ENCODE measurements at regions of chr10 and their contacts with region 1.

Region 1: DNA sequence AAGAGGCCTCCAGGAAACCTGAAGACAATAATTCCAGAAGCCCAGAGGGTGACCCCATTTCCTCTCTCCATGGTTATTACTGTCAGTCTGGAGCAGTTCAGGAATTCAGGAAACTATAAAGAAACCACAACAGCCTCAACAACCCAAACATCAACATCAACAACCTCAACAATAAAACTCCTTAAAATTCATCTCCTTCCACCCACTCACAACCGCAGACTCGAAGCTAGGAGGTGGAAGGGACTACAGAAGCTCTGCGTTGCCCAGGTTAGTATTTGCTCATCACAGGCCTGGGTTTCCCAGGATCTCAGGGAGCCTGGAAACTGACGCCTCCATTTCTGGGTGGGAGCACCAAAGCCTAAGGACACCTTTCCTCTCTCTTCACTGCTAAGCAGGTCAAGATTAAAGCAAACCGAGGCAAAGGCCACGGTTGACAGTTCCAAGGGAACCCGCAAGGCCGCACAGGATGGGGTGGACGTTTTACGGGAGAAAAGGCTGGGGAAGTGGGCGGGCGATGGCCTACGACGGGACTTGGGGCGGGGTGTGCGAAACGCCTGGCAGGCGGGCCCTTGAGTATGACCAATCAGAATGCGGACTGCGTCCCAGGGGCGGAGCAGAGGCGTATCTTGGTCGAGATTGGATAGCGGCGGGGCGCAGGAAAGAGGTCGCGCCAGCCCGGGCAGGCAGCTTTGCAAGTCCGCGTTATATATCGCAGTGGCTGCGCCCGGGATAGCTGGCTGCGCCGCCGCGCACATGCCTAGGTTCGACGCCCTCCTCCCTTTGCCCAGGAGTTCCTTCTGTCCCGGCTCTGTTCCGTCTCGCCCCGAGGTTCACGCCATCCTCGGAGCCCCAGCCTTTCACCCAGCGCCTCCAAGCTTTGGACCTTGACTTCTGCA is at the start of gene ELOVL3:
- H3K4me3 ChIP-seq: no peak within 1 kb of the TSS
- H3K27ac ChIP-seq: no peak within 1 kb of the TSS
- H3K4me1 ChIP-seq: peaks cover 7% of the 10 kb centered on the region
- CTCF ChIP-seq: no peak

Region 2: GRCh38 chr10:102208311-102209035 is 17.4 kb before region 1 on chr10:
- CTCF ChIA-PET with region 1: interaction called, 12 read pairs
- POLR2A ChIA-PET with region 1: no interaction called
- H3K4me3 ChIP-seq: no peak overlapping the region
- H3K27ac ChIP-seq: no peak overlapping the region
- H3K4me1 ChIP-seq: 0 out of 2 replicates have a peak, but pooled peaks cover 2% of the 10 kb centered on the region
- CTCF ChIP-seq: no peak

Region 3: DNA sequence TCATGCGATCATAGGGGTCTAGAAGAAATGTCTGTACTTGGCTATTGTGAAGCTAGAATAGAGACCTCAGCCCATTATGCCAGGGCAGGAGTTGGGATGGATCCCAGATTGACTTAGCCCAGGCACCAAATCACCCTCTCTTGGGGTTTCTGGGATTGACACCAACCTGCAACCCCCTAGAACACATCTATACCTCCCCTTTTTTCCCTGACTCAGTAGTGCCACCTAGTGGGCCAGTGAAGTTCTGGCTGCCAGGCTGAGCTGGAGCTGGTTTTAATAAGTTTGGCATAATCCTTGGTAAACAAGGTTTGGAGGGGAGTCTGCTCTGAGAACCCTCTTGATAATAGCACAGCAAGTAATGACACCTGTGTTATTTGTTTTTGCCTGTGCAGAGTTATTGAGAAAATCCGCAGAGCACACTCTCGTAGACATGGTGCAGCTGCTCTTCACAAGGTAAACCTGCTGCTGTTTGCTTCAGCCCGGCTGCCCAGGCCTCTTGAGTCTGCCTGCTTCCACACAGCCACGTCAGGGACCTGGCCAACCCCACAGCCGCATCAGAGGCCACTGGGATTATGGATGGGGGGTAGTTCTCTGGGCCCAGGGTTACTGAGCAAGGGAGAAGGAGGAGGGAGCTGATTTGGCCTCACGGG is 126.3 kb after region 1 on chr10:
- CTCF ChIA-PET with region 1: interaction called, 531 read pairs
- POLR2A ChIA-PET with region 1: interaction called, 7 read pairs
- H3K4me3 ChIP-seq: no peak overlapping the region
- H3K27ac ChIP-seq: no peak overlapping the region
- H3K4me1 ChIP-seq: no peaks in the 10 kb centered on the region
- CTCF ChIP-seq: peak; percentile 61; the same call in 1 of the 2 replicates

Region 4: GRCh38 chr10:102394079-102394800 is 168.3 kb after region 1 on chr10:
- CTCF ChIA-PET with region 1: interaction called, 52 read pairs
- POLR2A ChIA-PET with region 1: interaction called, 3 read pairs
- H3K4me3 ChIP-seq: peak overlapping the region; percentile 58
- H3K27ac ChIP-seq: no peak overlapping the region; the same call in 1 of the 2 replicates
- H3K4me1 ChIP-seq: peaks cover 5% of the 10 kb centered on the region; the same call in 1 of the 2 replicates
- CTCF ChIP-seq: peak; percentile 94

Region 5: GRCh38 chr10:102420810-102421644 is 195.1 kb after region 1 on chr10 and contains the start of gene FBXL15:
- CTCF ChIA-PET with region 1: interaction called, 38 read pairs
- POLR2A ChIA-PET with region 1: interaction called, 11 read pairs
- H3K4me3 ChIP-seq: peak within 1 kb of the TSS; percentile 80
- H3K27ac ChIP-seq: peak within 1 kb of the TSS; percentile 65
- H3K4me1 ChIP-seq: peaks cover 9% of the 10 kb centered on the region
- CTCF ChIP-seq: no peak

Region 6: DNA sequence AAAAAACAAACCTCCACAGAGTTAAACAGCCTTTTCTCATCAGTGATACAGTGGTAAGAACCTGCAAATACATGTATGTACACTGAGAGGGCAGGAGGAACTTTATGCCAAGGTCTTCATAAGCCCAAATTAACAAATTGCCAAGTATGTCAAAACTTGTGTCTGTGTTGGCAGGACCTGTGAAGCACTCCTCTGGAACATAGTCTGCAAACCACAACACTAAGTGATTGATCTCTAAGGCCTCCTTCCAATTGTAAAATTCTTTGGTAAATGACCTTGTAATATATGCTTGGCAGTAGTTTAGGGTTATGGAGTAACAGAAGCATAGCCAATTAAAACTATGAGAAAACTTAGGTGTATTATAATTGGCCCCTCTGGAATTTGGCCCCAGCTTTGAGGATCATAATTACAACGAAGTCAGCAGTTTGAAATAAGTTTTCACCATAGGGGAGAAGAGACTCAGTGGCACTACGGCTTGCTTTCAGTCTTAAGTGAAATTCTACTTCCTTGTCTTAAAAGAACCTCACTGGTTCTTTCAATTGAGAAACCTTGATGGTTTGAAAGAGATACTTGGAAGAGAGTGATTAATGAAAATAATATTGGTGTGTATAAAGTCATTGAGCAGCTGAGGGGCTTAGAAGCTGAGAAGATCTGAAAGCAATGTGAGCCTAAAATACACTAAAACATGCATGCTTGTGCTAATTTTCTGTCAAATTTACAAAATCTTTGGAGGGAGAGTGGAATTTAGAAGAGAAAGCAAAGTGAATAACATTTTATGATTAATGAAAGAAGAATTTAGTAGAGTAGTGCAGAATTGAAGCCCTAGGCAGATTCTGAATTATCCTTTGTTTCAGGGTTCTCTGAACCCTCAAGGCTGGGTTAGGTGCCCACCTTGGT is 749.8 kb after region 1 on chr10:
- CTCF ChIA-PET with region 1: no interaction called
- POLR2A ChIA-PET with region 1: no interaction called
- H3K4me3 ChIP-seq: no peak overlapping the region
- H3K27ac ChIP-seq: no peak overlapping the region
- H3K4me1 ChIP-seq: peaks cover 11% of the 10 kb centered on the region
- CTCF ChIP-seq: no peak